ENCODE measurements at regions of chr7 and their contacts with region 1.

Region 1: GRCh38 chr7:66075590-66076461 is at the start of gene ASL:
- DNase-seq: peak; percentile 88
- H3K4me3 ChIP-seq: peak within 1 kb of the TSS; percentile 80 to 97 (median 80)
- H3K27ac ChIP-seq: peak within 1 kb of the TSS; percentile 47
- H3K4me1 ChIP-seq: peaks cover 4% of the 10 kb centered on the region
- H3K27me3 ChIP-seq: no peaks in the 10 kb centered on the region
- CTCF ChIP-seq: no peak
- total RNA-seq, gene ASL: 43.5 to 59.7 TPM

Region 2: DNA sequence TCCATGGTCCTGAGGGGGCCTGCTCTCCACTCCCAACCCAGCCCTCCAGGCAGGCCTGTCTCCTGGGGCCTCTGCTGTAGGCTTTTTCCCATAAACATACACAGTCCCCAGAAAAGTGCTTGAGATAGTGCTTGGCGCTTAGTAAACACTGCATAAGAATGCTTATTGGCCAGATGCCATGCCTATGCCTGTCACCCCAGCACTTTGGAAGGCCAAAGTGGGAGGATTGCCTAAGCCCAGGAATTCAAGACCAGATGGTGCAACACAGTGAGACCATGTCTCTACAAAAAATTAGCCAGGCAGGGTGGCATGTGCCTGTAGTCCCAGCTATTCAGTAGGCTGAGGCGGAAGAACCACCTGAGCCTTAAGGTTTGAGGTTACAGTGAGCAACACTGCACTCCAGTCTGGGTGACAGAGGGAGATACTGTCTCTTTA is 24.8 kb before region 1 on chr7:
- CTCF ChIA-PET with region 1: no interaction called
- dilution Hi-C with region 1: no loop called
- in situ Hi-C with region 1: no loop called
- intact Hi-C with region 1: loop called (anchors 1 kb)
- DNase-seq: peak; percentile 95
- H3K4me3 ChIP-seq: no peak overlapping the region
- H3K27ac ChIP-seq: no peak overlapping the region
- H3K4me1 ChIP-seq: peaks cover 11% of the 10 kb centered on the region
- H3K27me3 ChIP-seq: no peaks in the 10 kb centered on the region
- CTCF ChIP-seq: no peak

Region 3: DNA sequence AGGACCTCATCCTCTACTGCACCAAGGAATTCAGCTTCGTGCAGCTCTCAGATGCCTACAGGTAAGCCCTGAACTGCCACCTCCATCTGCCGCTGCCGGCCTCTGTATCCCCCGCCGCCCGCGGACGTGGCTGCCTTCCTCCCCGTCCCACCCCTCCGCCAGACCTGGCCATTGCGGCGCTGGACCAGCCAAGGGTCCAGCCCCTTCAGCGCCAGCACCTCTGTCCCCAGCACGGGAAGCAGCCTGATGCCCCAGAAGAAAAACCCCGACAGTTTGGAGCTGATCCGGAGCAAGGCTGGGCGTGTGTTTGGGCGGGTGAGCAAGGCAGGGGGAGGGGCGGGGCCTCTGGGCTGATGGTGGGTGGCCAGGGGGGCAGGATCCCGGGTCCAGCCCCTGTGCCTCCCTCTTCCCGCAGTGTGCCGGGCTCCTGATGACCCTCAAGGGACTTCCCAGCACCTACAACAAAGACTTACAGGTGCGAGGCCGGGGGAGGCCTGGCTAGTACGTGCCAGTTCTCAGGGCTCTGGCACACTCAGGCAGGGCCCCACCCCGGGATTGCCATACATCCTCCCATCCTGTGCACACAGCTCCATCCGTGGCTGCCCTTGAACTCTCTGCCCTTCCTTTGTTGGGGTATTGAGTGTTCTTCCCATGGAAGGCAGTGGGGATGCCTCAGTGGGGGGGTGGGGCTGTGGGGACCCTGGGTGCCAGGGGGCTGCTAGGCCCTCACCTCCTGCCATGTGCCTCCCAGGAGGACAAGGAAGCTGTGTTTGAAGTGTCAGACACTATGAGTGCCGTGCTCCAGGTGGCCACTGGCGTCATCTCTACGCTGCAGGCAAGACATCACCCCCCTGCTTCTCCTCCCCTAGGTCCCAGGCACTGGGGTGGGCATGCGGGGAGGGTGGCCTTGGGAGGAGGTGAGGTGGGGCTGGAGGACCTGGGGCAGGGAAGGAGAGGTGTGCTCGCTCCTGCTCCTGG is 13.3 kb after region 1 on chr7:
- CTCF ChIA-PET with region 1: no interaction called
- dilution Hi-C with region 1: no loop called
- in situ Hi-C with region 1: no loop called
- intact Hi-C with region 1: no loop called
- DNase-seq: no peak
- H3K4me3 ChIP-seq: no peak overlapping the region
- H3K27ac ChIP-seq: no peak overlapping the region
- H3K4me1 ChIP-seq: peaks cover 6% of the 10 kb centered on the region
- H3K27me3 ChIP-seq: no peaks in the 10 kb centered on the region
- CTCF ChIP-seq: no peak

Region 4: DNA sequence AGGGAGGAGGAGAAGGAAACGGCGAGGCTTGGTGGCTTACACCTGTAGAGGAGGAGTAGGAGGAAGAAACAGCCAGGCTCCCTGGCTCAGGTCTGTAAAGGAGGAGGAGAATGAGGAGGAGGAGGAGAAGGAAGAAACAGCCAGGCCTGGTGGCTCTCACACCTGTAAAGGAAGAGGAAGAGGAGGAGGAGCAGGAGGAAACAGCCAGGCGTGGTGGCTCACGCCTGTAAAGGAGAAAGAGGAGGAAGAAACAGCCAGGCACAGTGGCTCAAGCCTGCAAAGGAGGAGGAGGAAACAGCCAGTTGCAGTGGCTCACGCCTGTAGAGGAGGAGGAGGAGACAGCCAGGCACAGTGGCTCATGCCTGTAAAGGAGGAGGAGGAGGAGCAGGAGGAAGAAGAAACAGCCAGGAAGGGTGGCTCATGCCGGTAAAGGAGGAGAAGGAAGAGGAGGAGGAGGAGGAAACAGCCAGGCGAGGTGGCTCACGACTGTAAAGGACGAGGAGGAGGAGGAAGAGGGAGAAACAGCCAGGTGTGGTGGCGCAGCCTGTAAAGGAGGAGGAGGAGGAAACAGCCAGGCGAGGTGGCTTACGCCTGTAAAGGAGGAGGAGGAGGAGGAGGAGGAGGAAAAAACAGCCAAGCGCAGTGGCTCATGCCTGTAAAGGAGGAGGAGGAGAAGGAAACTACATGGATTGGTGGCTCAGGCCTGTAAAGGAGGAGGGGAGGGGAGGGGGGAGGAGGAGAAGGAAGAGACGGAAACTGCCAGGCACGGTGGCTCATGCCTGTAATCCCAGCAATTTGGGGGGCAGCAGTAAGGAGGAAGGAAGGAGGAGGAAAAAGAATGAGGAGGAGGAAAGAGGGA is 24.0 kb after region 1 on chr7:
- CTCF ChIA-PET with region 1: no interaction called
- dilution Hi-C with region 1: no loop called
- in situ Hi-C with region 1: no loop called
- intact Hi-C with region 1: loop called (anchors 1 kb)
- DNase-seq: peak; percentile 92
- H3K4me3 ChIP-seq: peak overlapping the region; percentile 34 to 53 (median 36)
- H3K27ac ChIP-seq: peak overlapping the region; percentile 25
- H3K4me1 ChIP-seq: peaks cover 3% of the 10 kb centered on the region
- H3K27me3 ChIP-seq: no peaks in the 10 kb centered on the region
- CTCF ChIP-seq: no peak

Region 5: DNA sequence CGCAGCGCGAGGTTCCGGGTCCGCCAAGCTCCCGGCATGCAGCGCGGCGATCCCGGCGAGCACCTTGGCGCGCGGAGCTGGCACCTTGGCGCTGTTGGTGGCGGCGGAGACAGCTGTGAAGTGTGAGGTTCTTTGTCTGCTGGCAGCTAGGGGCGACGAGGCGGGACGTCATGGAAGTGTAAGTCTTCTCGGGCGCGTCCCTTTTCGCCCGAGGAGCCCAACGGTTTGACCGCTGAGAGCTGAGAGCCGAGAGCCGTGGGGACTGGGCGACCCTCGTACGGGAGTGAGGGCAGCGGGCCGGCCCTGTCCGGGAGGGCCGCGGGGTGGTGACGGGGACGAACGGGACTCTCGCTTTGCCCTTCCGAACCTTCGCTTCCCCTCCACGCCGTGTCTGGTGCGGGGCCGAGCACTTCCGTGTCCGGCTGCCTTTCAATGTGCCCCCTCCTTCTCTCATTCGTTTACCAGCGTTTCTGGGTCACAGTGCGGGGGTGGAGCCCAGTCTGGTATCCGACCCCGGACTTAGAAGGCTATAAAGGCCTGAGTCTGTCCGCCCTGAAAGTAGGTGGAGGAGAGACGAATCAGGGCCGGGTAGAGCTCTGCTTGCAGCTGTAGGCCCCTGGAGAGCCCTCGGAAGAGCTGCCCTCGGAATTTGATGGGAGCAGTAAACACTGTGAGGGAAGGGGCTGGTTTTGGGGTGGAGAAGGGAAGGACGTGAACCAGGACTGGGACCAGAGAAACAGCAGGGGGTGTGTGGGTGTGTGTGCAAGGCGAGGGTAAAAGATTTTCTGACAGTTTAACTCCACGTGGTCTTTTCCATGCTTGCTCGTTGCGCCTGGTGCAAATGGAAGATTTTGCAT is 39.2 kb after region 1 on chr7 and contains the start of gene CRCP:
- CTCF ChIA-PET with region 1: no interaction called
- dilution Hi-C with region 1: no loop called
- in situ Hi-C with region 1: no loop called
- intact Hi-C with region 1: loop called (anchors 5 kb)
- DNase-seq: peak; percentile 75
- H3K4me3 ChIP-seq: peak within 1 kb of the TSS; percentile 84 to 91 (median 87)
- H3K27ac ChIP-seq: peak within 1 kb of the TSS; percentile 83
- H3K4me1 ChIP-seq: peaks cover 18% of the 10 kb centered on the region
- H3K27me3 ChIP-seq: no peaks in the 10 kb centered on the region
- CTCF ChIP-seq: peak; percentile 33 to 42
- total RNA-seq, gene CRCP: 34.7 to 35.3 TPM